MCF 10A (cell line): ENCODE measurements at regions of chr9 and their contacts with region 1.

Region 1: DNA sequence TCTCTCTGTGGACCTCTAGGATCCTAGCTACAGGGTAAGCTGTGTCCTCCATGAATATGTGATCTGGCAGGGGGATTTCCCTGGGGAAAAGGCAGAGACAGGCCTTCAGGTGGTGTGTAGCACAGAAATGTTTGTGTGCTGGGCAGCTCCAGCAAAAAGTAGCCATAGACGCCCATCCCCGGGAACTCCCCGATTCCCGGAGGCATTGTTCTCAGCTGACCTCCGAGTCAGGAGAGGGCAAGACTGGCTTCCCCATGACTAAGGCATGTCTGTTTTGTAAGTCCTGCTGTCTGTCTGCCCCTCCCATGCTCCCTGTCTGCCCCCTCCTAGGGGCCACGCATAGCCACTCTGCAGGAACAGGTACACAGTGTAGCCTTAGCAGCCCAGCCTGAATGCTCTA is 834.5 kb downstream of the PTPRD start:
- DNase-seq: no peak
- H3K4me3 Mint-ChIP-seq: no peak overlapping the region
- H3K27ac Mint-ChIP-seq: no peak overlapping the region
- H3K4me1 Mint-ChIP-seq: no peaks in the 10 kb centered on the region
- H3K27me3 Mint-ChIP-seq: peaks cover 14% of the 10 kb centered on the region
- CTCF ChIP-seq: no peak

Region 2: DNA sequence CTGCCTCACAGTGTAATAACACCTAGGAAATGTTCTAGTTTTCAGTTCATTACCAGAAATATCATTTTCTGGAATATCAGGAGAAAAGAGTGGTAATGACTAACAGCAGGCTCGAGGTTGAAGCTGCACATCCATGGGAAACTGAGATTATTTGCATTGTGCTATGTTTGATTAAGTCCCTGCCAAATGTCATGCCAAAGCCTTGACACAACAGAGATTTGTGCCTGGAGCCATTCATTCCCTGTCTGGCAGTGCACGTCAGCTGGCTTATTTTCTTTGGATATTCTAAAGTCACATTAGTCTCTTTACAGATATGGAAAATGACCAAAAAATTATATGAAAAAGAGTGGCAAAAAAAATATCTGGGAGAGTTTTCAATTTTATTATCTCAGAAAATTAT is 13.5 kb before region 1 on chr9:
- CTCF ChIA-PET with region 1: no interaction called
- POLR2A ChIA-PET with region 1: no interaction called
- intact Hi-C with region 1: no loop called
- DNase-seq: no peak
- H3K4me3 Mint-ChIP-seq: no peak overlapping the region
- H3K27ac Mint-ChIP-seq: no peak overlapping the region
- H3K4me1 Mint-ChIP-seq: no peaks in the 10 kb centered on the region
- H3K27me3 Mint-ChIP-seq: peaks cover 37% of the 10 kb centered on the region
- CTCF ChIP-seq: no peak

Region 3: DNA sequence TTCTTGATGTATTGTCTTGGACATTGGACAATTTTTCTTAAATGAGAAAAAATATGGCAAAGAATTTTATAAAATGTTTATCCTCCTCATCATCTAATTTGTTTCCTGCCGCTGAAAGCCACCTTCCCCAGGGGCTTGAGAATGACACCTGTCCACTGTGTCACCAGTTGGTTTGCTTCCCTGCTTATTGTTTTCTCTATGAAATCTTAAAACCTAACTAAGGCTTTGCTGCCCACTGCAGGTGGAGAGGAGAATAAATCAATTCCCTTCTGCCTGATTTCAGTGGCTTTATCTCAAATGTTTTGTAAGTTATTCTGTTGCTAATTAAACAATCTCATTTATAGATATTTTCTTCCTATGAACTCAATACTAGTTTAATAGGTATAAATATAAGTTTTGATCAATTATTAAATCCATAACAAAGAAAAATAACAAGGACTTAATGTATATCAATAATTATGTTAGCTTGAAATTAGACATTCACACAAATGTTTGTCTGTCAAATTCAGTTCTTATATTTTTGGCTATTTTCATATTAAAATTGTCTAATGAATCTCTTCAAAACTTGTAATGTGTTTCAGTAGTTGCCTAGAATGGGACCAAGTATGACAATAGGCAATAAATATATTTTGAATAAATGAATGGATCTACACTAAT is 12.1 kb after region 1 on chr9:
- CTCF ChIA-PET with region 1: interaction called, 23 read pairs
- POLR2A ChIA-PET with region 1: no interaction called
- intact Hi-C with region 1: no loop called
- DNase-seq: peak; percentile 47
- H3K4me3 Mint-ChIP-seq: no peak overlapping the region
- H3K27ac Mint-ChIP-seq: no peak overlapping the region
- H3K4me1 Mint-ChIP-seq: no peaks in the 10 kb centered on the region
- H3K27me3 Mint-ChIP-seq: peaks cover 17% of the 10 kb centered on the region
- CTCF ChIP-seq: peak; percentile 54